ENCODE measurements at regions of chr17 and their contacts with region 1.

Region 1: DNA sequence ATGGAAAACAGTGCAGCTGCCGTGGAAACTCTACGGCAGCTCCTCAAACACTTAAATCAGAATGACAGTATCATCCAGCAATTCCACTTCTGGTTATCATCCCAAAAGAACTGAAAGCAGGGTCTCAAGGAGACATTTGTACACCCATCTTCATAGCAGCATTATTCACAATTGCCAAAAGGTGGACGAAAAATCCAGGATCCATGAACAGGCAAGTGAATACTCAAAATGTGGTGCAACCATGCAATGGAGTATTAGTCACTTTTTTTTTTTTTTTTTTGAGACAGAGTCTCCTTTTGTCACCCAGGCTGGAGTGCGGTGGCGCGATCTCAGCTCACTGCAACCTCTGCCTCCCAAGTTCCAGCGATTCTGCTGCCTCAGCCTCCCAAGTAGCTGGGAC is 10.6 kb upstream of the AATK start:
- DNase-seq: no peak
- ATAC-seq: no peak
- H3K4me3 ChIP-seq: no peak overlapping the region
- H3K27ac ChIP-seq: no peak overlapping the region
- H3K4me1 ChIP-seq: no peaks in the 10 kb centered on the region; the same call in 1 of the 2 replicates
- H3K27me3 ChIP-seq: no peaks in the 10 kb centered on the region
- CTCF ChIP-seq: no peak

Region 2: GRCh38 chr17:80361495-80362220 is 815.0 kb before region 1 on chr17:
- CTCF ChIA-PET with region 1: no interaction called
- POLR2A ChIA-PET with region 1: no interaction called
- in situ Hi-C with region 1: no loop called
- intact Hi-C with region 1: no loop called
- DNase-seq: no peak
- ATAC-seq: peak; percentile 40; the same call in 1 of the 2 replicates
- H3K4me3 ChIP-seq: no peak overlapping the region
- H3K27ac ChIP-seq: no peak overlapping the region
- H3K4me1 ChIP-seq: no peaks in the 10 kb centered on the region
- H3K27me3 ChIP-seq: no peaks in the 10 kb centered on the region
- CTCF ChIP-seq: no peak; the same call in 1 of the 2 replicates

Region 3: DNA sequence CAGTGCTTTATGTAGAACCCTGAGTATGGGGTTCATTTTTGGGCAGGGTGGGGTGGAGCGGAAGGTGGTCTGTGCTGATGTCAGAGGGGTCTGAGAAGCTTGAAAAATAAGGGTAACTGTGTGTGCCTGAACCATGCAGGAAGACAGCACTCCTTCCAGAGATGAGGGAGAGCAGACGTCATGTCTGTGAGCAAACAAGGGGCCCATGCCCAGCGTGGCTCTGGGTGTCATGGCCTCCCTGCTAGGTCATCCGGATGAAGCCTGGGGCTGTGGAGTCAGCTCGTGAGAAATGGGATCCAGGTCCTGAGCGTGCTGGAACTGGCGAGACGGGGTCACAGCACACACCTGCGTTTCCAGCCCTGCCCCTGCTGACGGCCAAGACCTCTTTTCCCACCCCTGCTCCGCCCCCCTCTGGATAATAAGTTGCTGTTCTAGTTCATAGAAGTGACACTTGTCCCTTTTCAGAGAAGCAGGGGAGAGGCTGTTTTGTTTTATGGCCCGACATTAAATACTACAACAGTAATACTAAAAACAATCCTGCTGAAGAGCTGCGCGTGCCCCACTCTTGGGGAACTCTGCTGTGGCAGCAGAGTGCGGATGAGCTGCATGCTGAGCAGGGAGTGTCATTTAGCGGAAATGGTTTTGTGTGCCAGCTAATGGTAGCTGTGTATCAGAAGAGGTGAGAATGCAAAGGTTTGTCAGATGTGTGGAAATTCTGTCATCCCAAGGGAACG is 539.5 kb before region 1 on chr17:
- CTCF ChIA-PET with region 1: no interaction called
- POLR2A ChIA-PET with region 1: no interaction called
- in situ Hi-C with region 1: no loop called
- intact Hi-C with region 1: no loop called
- DNase-seq: no peak
- ATAC-seq: no peak
- H3K4me3 ChIP-seq: no peak overlapping the region
- H3K27ac ChIP-seq: no peak overlapping the region
- H3K4me1 ChIP-seq: no peaks in the 10 kb centered on the region
- H3K27me3 ChIP-seq: no peaks in the 10 kb centered on the region
- CTCF ChIP-seq: no peak

Region 4: GRCh38 chr17:81119223-81120148 is 57.2 kb before region 1 on chr17:
- CTCF ChIA-PET with region 1: no interaction called
- POLR2A ChIA-PET with region 1: no interaction called
- in situ Hi-C with region 1: no loop called
- intact Hi-C with region 1: no loop called
- DNase-seq: peak; percentile 78
- ATAC-seq: peak; percentile 74
- H3K4me3 ChIP-seq: peak overlapping the region; percentile 50 to 52
- H3K27ac ChIP-seq: peak overlapping the region; percentile 48; the same call in 1 of the 2 replicates
- H3K4me1 ChIP-seq: peaks cover 34% of the 10 kb centered on the region
- H3K27me3 ChIP-seq: no peaks in the 10 kb centered on the region
- CTCF ChIP-seq: no peak; the same call in 1 of the 2 replicates

Region 5: DNA sequence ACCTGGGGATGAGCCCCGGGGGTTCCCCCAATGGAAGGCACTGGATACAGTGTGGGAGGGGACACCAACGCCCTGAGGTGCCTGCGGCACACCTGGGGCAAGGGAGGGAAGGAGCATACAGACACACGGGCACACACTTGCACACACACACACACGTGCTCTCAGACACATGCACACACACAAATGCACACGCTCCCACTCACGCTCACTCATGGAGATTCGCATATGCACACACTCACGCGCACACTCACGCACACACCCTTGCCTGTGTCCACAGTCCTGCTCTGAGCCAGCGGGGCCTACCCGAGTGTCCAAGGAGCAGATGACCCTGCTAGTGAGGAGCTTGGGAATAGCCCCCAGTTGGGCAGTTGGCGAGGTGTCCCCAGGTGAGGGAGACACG is 28.1 kb before region 1 on chr17:
- CTCF ChIA-PET with region 1: interaction called, 10 read pairs
- POLR2A ChIA-PET with region 1: no interaction called
- in situ Hi-C with region 1: no loop called
- intact Hi-C with region 1: loop called (anchors 5 kb)
- DNase-seq: no peak
- ATAC-seq: no peak
- H3K4me3 ChIP-seq: no peak overlapping the region
- H3K27ac ChIP-seq: no peak overlapping the region
- H3K4me1 ChIP-seq: no peaks in the 10 kb centered on the region
- H3K27me3 ChIP-seq: no peaks in the 10 kb centered on the region
- CTCF ChIP-seq: no peak

Region 6: GRCh38 chr17:81514739-81515529 is 338.3 kb after region 1 on chr17:
- CTCF ChIA-PET with region 1: no interaction called
- POLR2A ChIA-PET with region 1: interaction called, 10 read pairs
- in situ Hi-C with region 1: no loop called
- intact Hi-C with region 1: no loop called
- DNase-seq: no peak
- ATAC-seq: peak; percentile 35
- H3K4me3 ChIP-seq: peak overlapping the region; percentile 68 to 82
- H3K27ac ChIP-seq: peak overlapping the region; percentile 93
- H3K4me1 ChIP-seq: peaks cover 32% of the 10 kb centered on the region
- H3K27me3 ChIP-seq: no peaks in the 10 kb centered on the region
- CTCF ChIP-seq: no peak